H1 (cell line): ENCODE measurements at regions of chr14 and their contacts with region 1.

Region 1: GRCh38 chr14:76497537-76498462 is 121.9 kb downstream of the ESRRB start:
- DNase-seq: no peak
- H3K4me3 ChIP-seq: no peak overlapping the region
- H3K27ac ChIP-seq: no peak overlapping the region
- H3K4me1 ChIP-seq: no peaks in the 10 kb centered on the region
- H3K27me3 ChIP-seq: no peaks in the 10 kb centered on the region
- CTCF ChIP-seq: peak; percentile 46 to 51 (median 47)
- EP300 ChIP-seq: no peak
- POLR2A ChIP-seq: no peak
- RAD21 ChIP-seq: peak; percentile 67 to 73

Region 2: DNA sequence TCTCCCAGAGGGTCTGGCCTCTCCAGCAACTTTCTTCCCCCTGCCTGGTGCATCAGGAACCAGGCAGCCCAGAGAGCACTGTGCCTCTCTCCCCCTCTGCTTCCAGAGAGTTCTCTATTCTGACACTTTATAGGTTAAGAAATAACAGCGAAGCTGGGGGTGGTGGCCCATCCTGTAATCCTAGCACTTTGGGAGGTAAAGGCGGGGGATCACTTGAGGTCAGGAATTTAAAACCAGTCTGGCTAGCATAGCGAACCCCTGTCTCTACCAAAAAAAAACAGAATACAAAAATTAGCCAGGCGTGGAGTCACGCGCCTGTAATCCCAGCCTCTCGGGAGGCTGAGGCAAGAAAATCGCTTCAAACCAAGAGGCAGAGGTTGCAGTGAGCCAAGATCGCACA is 63.6 kb before region 1 on chr14:
- CTCF ChIA-PET with region 1: no interaction called
- POLR2A ChIA-PET with region 1: no interaction called
- DNase-seq: no peak
- H3K4me3 ChIP-seq: no peak overlapping the region
- H3K27ac ChIP-seq: no peak overlapping the region
- H3K4me1 ChIP-seq: peaks cover 0 to 3% (median 2%) of the 10 kb centered on the region in 4 experiments; a peak in 3 of 7 replicates
- H3K27me3 ChIP-seq: no peaks in the 10 kb centered on the region
- CTCF ChIP-seq: no peak
- EP300 ChIP-seq: no peak
- POLR2A ChIP-seq: no peak
- RAD21 ChIP-seq: no peak

Region 3: GRCh38 chr14:76473481-76474263 is 24.1 kb before region 1 on chr14:
- CTCF ChIA-PET with region 1: interaction called, 21 read pairs
- POLR2A ChIA-PET with region 1: no interaction called
- DNase-seq: peak in 1 of 2 experiments; percentile 56
- H3K4me3 ChIP-seq: no peak overlapping the region
- H3K27ac ChIP-seq: no peak overlapping the region
- H3K4me1 ChIP-seq: no peaks in the 10 kb centered on the region; a peak in 1 of 7 replicates
- H3K27me3 ChIP-seq: no peaks in the 10 kb centered on the region
- CTCF ChIP-seq: peak; percentile 51 to 57 (median 57)
- EP300 ChIP-seq: no peak
- POLR2A ChIP-seq: no peak
- RAD21 ChIP-seq: peak; percentile 40 to 57

Region 4: DNA sequence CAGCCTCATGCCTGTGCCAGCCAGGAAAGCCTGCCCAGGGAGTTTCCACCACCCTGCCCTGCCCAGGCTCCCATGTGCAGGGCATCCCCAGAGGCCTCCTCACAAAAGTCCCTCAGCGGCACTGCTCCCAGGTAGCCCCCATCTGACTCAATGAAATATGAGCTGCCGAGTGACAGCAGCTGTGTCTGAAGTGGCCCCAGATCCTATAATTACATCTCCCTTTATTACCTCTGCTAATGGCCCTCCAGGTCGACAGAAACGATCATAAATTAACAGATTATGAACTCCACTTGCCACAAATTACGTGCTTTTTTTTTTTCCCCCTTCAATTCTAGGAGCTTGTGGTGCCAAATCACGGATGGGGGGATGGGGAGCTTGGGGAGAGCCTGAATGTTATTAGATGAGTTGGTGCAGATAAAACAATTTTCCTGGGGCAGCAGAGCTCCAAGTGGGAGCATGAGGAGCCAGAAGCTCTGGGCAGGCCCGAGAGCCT is 11.5 kb before region 1 on chr14:
- CTCF ChIA-PET with region 1: interaction called, 87 read pairs
- POLR2A ChIA-PET with region 1: no interaction called
- DNase-seq: no peak
- H3K4me3 ChIP-seq: no peak overlapping the region
- H3K27ac ChIP-seq: no peak overlapping the region
- H3K4me1 ChIP-seq: peaks cover 0 to 4% (median 3%) of the 10 kb centered on the region in 4 experiments; a peak in 3 of 7 replicates
- H3K27me3 ChIP-seq: no peaks in the 10 kb centered on the region
- CTCF ChIP-seq: no peak
- EP300 ChIP-seq: no peak
- POLR2A ChIP-seq: no peak
- RAD21 ChIP-seq: no peak

Region 5: GRCh38 chr14:76509311-76509710 is 11.5 kb after region 1 on chr14:
- CTCF ChIA-PET with region 1: interaction called, 15 read pairs
- POLR2A ChIA-PET with region 1: no interaction called
- DNase-seq: no peak
- H3K4me3 ChIP-seq: no peak overlapping the region
- H3K27ac ChIP-seq: no peak overlapping the region
- H3K4me1 ChIP-seq: peaks cover 0 to 5% (median 0%) of the 10 kb centered on the region in 4 experiments; a peak in 4 of 7 replicates
- H3K27me3 ChIP-seq: no peaks in the 10 kb centered on the region; a peak in 1 of 7 replicates
- CTCF ChIP-seq: peak in 2 of 3 experiments; percentile 15 to 41; a peak in 2 of 4 replicates
- EP300 ChIP-seq: no peak
- POLR2A ChIP-seq: no peak
- RAD21 ChIP-seq: peak; percentile 19 to 32; a peak in 2 of 4 replicates